ENCODE measurements at regions of chr3 and their contacts with region 1.

Region 1: DNA sequence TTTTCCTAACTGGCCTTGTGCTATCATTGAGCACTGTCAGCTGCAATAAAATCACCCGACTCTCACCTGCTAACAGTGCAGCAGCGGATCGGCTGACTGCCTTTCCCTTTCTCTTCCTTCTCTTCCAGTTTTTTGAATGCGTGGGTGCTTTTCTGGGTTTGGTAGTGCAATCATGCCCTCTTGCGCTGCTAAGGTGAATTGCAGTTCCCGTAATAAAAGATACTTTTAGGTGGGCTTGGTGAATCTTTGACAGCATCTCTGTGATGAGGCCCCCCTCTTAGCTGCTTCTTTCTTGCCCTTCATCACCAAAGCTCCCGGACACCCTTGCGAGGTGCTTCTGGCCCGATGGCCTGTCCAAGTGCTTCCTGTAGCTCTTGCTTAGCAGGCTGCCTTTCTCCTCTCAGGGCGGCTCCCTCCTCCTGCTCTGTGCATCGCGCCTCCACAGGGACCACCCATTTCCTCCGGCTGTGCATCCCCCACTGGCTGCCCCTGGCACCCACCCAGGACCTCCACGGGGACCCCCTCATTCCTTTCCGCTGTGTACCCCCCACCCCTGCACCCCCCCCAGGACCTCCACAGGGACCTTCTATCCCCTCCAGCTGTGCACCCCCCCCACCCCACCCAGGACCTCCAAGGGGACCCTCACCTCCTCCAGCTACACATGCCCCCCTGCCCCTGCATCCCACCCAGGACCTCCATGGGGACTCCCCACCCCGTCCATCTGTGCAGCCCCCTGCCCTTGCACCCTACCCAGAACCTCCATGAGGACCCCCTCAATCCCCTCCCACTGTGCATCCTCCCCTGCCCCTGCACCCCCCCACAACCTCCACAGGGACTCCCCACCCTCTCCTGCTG is 50.8 kb upstream of the RPL32 start:
- DNase-seq: peak; percentile 78
- ATAC-seq: peak; percentile 55
- H3K4me3 ChIP-seq: peak overlapping the region; percentile 50
- H3K27ac ChIP-seq: no peak overlapping the region
- H3K4me1 ChIP-seq: peaks cover 26% of the 10 kb centered on the region
- H3K27me3 ChIP-seq: no peaks in the 10 kb centered on the region
- CTCF ChIP-seq: peak; percentile 95

Region 2: DNA sequence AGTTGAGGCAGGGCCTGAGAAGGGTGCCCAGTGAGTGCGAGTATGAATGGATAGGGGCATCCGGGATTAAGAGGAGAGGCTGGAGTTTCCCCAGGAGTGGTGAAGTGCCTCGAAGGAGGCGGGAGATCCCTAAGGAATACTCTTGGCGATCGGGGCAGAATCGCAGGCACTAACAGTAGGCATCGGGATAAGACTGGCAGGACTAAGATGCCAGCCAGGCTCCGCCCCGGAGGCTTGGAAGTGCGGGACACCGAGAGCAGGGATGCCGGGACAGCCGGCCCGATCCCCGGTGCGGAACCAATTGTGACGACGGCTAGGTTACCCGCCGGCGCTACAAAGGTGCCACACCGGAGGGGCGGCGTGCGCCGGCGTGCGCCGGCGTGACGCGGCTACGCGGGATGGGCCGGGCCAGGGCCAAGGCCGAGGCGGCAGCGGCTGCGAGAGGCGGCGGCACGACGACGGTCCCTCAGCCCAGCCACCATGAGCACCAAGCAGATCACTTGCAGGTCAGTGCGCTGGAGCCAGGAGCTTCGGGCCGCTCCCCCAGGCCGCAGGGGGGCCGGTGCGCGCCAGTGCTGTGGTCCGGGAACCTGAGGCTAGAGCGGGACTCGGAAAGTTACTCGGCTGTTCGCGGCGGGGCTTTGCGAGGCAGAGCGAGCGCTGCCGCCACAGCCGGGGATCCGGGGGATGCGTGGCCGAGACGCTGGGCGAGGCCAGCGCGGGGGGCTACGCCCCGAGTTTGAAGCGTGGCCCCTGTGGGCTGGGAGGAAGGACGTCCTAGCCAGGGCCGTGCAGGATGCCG is 335.3 kb before region 1 on chr3 and contains the start of gene MKRN2:
- CTCF ChIA-PET with region 1: no interaction called
- POLR2A ChIA-PET with region 1: no interaction called
- intact Hi-C with region 1: loop called (anchors 10 kb)
- DNase-seq: peak; percentile 95
- ATAC-seq: peak; percentile 91
- H3K4me3 ChIP-seq: peak within 1 kb of the TSS; percentile 78
- H3K27ac ChIP-seq: peak within 1 kb of the TSS; percentile 66
- H3K4me1 ChIP-seq: peaks cover 16% of the 10 kb centered on the region
- H3K27me3 ChIP-seq: no peaks in the 10 kb centered on the region
- CTCF ChIP-seq: no peak
- total RNA-seq, gene MKRN2: 41.6 and 45.8 TPM in 2 replicates

Region 3: GRCh38 chr3:12629560-12629959 is 262.7 kb before region 1 on chr3:
- CTCF ChIA-PET with region 1: no interaction called
- POLR2A ChIA-PET with region 1: no interaction called
- intact Hi-C with region 1: no loop called
- DNase-seq: peak; percentile 15
- ATAC-seq: peak; percentile 91
- H3K4me3 ChIP-seq: no peak overlapping the region
- H3K27ac ChIP-seq: no peak overlapping the region
- H3K4me1 ChIP-seq: peaks cover 6% of the 10 kb centered on the region; the same call in 1 of the 2 replicates
- H3K27me3 ChIP-seq: no peaks in the 10 kb centered on the region
- CTCF ChIP-seq: no peak

Region 4: GRCh38 chr3:12706504-12707253 is 185.5 kb before region 1 on chr3:
- CTCF ChIA-PET with region 1: no interaction called
- POLR2A ChIA-PET with region 1: no interaction called
- intact Hi-C with region 1: loop called (anchors 2 kb)
- DNase-seq: peak; percentile 92
- ATAC-seq: peak; percentile 94
- H3K4me3 ChIP-seq: no peak overlapping the region
- H3K27ac ChIP-seq: no peak overlapping the region
- H3K4me1 ChIP-seq: peaks cover 18% of the 10 kb centered on the region
- H3K27me3 ChIP-seq: no peaks in the 10 kb centered on the region
- CTCF ChIP-seq: peak; percentile 96

Region 5: GRCh38 chr3:12822725-12823373 is 69.4 kb before region 1 on chr3:
- CTCF ChIA-PET with region 1: interaction called, 8 read pairs
- POLR2A ChIA-PET with region 1: no interaction called
- intact Hi-C with region 1: loop called (anchors 5 kb)
- DNase-seq: peak; percentile 73
- ATAC-seq: peak; percentile 84
- H3K4me3 ChIP-seq: no peak overlapping the region
- H3K27ac ChIP-seq: no peak overlapping the region
- H3K4me1 ChIP-seq: no peaks in the 10 kb centered on the region
- H3K27me3 ChIP-seq: no peaks in the 10 kb centered on the region
- CTCF ChIP-seq: peak; percentile 63

Region 6: GRCh38 chr3:12856626-12857025 is 35.6 kb before region 1 on chr3:
- CTCF ChIA-PET with region 1: no interaction called
- POLR2A ChIA-PET with region 1: no interaction called
- intact Hi-C with region 1: no loop called
- DNase-seq: no peak
- ATAC-seq: no peak
- H3K4me3 ChIP-seq: no peak overlapping the region
- H3K27ac ChIP-seq: no peak overlapping the region
- H3K4me1 ChIP-seq: peaks cover 14% of the 10 kb centered on the region
- H3K27me3 ChIP-seq: no peaks in the 10 kb centered on the region
- CTCF ChIP-seq: no peak

Region 7: GRCh38 chr3:12868039-12869034 is 23.9 kb before region 1 on chr3:
- CTCF ChIA-PET with region 1: interaction called, 11 read pairs
- POLR2A ChIA-PET with region 1: no interaction called
- intact Hi-C with region 1: loop called (anchors 1 kb)
- DNase-seq: peak; percentile 93
- ATAC-seq: peak; percentile 99
- H3K4me3 ChIP-seq: no peak overlapping the region
- H3K27ac ChIP-seq: no peak overlapping the region
- H3K4me1 ChIP-seq: no peaks in the 10 kb centered on the region
- H3K27me3 ChIP-seq: no peaks in the 10 kb centered on the region
- CTCF ChIP-seq: peak; percentile 82